Posterior cingulate gyrus (tissue), 11 donors: ENCODE measurements at regions of chr7 and their contacts with region 1.

Region 1: GRCh38 chr7:113705439-113705838 is 213.4 kb downstream of the PPP1R3A start:
- DNase-seq: no peak

Region 2: GRCh38 chr7:112500619-112501018 is 1204.8 kb before region 1 on chr7:
- intact Hi-C with region 1: loop called (anchors 10 kb)
- DNase-seq: no peak